ENCODE measurements at regions of chr7 and their contacts with region 1.

Region 1: GRCh38 chr7:33895025-33895804 is 10.1 kb upstream of the BMPER start:
- DNase-seq: peak; percentile 84
- H3K4me3 ChIP-seq: peak overlapping the region in 1 of 2 experiments; percentile 4; a peak in 1 of 4 replicates
- H3K27ac ChIP-seq: no peak overlapping the region
- H3K4me1 ChIP-seq: peaks cover 2 to 10% of the 10 kb centered on the region in 2 experiments; a peak in 2 of 4 replicates
- H3K27me3 ChIP-seq: no peaks in the 10 kb centered on the region
- CTCF ChIP-seq: peak; percentile 99
- EP300 ChIP-seq: no peak
- RAD21 ChIP-seq: peak; percentile 86

Region 2: DNA sequence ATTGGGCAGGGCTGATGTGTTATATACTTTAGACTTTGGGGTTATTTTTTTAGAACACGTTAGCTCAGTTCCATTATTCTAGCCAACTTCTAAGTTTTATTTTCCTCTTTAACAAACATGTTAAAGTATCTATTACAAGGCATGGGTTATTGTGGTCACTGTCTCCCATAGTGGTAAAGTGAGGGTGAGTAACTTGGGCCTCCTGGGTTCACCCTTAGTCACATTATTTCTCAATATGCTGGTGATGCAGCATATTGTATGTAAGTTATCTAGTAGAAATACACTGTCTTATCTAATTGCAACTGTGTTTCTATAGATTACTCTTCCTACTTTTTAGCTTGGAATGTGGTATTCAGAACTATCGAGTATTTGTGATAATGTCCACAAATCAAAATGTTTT is 700.0 kb before region 1 on chr7:
- CTCF ChIA-PET with region 1: interaction called, 15 read pairs
- POLR2A ChIA-PET with region 1: no interaction called
- DNase-seq: no peak
- H3K4me3 ChIP-seq: no peak overlapping the region
- H3K27ac ChIP-seq: no peak overlapping the region
- H3K4me1 ChIP-seq: no peaks in the 10 kb centered on the region; a peak in 1 of 4 replicates
- H3K27me3 ChIP-seq: no peaks in the 10 kb centered on the region
- CTCF ChIP-seq: no peak
- EP300 ChIP-seq: no peak
- RAD21 ChIP-seq: no peak

Region 3: DNA sequence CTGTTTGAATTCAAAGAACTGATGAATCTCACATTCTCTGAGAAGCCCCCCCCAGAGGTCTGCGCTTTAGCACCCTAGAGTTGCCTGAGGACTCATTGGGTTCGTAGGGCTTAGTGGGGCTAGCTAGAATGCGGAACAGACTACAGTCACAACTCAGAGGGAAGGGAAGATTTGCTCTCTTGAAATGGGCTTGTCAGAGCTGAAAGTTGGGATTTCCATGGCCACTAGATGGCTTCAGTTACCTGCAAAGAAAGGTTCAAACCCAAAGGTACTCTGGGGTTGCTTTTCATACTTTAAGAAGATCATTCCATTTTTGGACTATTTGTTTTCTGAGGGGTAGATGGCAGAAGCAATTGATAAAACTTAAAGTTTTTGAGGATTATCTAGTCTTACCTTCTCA is 560.9 kb before region 1 on chr7:
- CTCF ChIA-PET with region 1: interaction called, 23 read pairs
- POLR2A ChIA-PET with region 1: no interaction called
- DNase-seq: peak; percentile 16
- H3K4me3 ChIP-seq: no peak overlapping the region
- H3K27ac ChIP-seq: no peak overlapping the region
- H3K4me1 ChIP-seq: no peaks in the 10 kb centered on the region
- H3K27me3 ChIP-seq: no peaks in the 10 kb centered on the region
- CTCF ChIP-seq: peak; percentile 57
- EP300 ChIP-seq: no peak
- RAD21 ChIP-seq: peak; percentile 81

Region 4: GRCh38 chr7:33722383-33723101 is 172.7 kb before region 1 on chr7:
- CTCF ChIA-PET with region 1: interaction called, 15 read pairs
- POLR2A ChIA-PET with region 1: no interaction called
- DNase-seq: peak; percentile 93
- H3K4me3 ChIP-seq: peak overlapping the region; percentile 25 to 31
- H3K27ac ChIP-seq: peak overlapping the region; percentile 33 to 77
- H3K4me1 ChIP-seq: peaks cover 9 to 27% of the 10 kb centered on the region in 2 experiments
- H3K27me3 ChIP-seq: no peaks in the 10 kb centered on the region
- CTCF ChIP-seq: no peak
- EP300 ChIP-seq: peak; percentile 17 to 94; a peak in 3 of 4 replicates
- RAD21 ChIP-seq: 0 out of 2 replicates have a peak, but pooled peaks have one; percentile 2

Region 5: GRCh38 chr7:33807779-33808482 is 87.3 kb before region 1 on chr7:
- CTCF ChIA-PET with region 1: interaction called, 14 read pairs
- POLR2A ChIA-PET with region 1: no interaction called
- DNase-seq: peak; percentile 48
- H3K4me3 ChIP-seq: no peak overlapping the region
- H3K27ac ChIP-seq: peak overlapping the region; percentile 39 to 84; a peak in 3 of 4 replicates
- H3K4me1 ChIP-seq: peaks cover 12 to 35% of the 10 kb centered on the region in 2 experiments
- H3K27me3 ChIP-seq: no peaks in the 10 kb centered on the region
- CTCF ChIP-seq: peak; percentile 77
- EP300 ChIP-seq: peak in 1 of 2 experiments; percentile 80; a peak in 2 of 4 replicates
- RAD21 ChIP-seq: peak; percentile 67

Region 6: GRCh38 chr7:33873981-33874753 is 21.0 kb before region 1 on chr7:
- CTCF ChIA-PET with region 1: interaction called, 21 read pairs
- POLR2A ChIA-PET with region 1: no interaction called
- DNase-seq: no peak
- H3K4me3 ChIP-seq: no peak overlapping the region; a peak in 1 of 4 replicates
- H3K27ac ChIP-seq: peak overlapping the region in 1 of 2 experiments; percentile 65; a peak in 2 of 4 replicates
- H3K4me1 ChIP-seq: peaks cover 0 to 26% of the 10 kb centered on the region in 2 experiments; a peak in 2 of 4 replicates
- H3K27me3 ChIP-seq: no peaks in the 10 kb centered on the region
- CTCF ChIP-seq: no peak
- EP300 ChIP-seq: peak in 1 of 2 experiments; percentile 77; a peak in 1 of 4 replicates
- RAD21 ChIP-seq: no peak

Region 7: GRCh38 chr7:34133983-34134782 is 239.0 kb after region 1 on chr7:
- CTCF ChIA-PET with region 1: no interaction called
- POLR2A ChIA-PET with region 1: no interaction called
- DNase-seq: peak; percentile 64
- H3K4me3 ChIP-seq: peak overlapping the region in 1 of 2 experiments; percentile 34; a peak in 2 of 4 replicates
- H3K27ac ChIP-seq: peak overlapping the region; percentile 39 to 98; a peak in 3 of 4 replicates
- H3K4me1 ChIP-seq: peaks cover 6 to 37% of the 10 kb centered on the region in 2 experiments; a peak in 3 of 4 replicates
- H3K27me3 ChIP-seq: no peaks in the 10 kb centered on the region
- CTCF ChIP-seq: peak; percentile 100
- EP300 ChIP-seq: no peak
- RAD21 ChIP-seq: peak; percentile 90

Region 8: DNA sequence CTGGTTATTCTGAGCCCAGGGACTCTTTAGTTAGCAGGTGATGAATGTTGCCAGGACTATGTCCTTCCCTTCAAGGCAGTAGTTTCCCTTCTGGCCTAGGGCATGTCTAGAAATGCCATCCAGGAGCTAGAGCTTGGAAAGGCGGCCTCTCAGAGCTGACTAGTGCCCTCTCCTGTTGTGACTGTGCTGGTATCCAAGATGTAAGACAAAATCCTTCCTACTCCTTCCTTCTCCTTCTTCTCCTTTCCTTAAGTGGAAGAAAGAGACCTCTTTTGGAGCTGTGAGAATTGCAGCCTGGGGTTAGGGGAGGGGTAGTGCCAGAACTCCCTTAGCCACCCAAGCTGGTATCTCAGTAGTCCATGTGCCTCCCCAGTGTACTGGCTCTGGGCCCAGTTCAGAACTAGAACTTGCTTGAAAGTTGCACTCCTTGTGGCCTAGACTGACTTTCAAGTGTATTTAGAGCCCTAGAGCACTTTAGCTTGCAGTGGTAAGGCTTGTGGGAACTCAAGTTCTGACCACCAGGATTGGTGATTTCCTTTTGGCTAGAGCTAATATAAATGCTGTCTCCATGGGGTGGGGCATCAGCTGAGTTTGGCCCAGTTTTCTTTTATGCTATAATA is 881.6 kb after region 1 on chr7:
- CTCF ChIA-PET with region 1: no interaction called
- POLR2A ChIA-PET with region 1: no interaction called
- DNase-seq: no peak
- H3K4me3 ChIP-seq: no peak overlapping the region
- H3K27ac ChIP-seq: no peak overlapping the region
- H3K4me1 ChIP-seq: no peaks in the 10 kb centered on the region
- H3K27me3 ChIP-seq: no peaks in the 10 kb centered on the region
- CTCF ChIP-seq: no peak
- EP300 ChIP-seq: no peak
- RAD21 ChIP-seq: no peak